ENCODE measurements at regions of chr19 and their contacts with region 1.

Region 1: DNA sequence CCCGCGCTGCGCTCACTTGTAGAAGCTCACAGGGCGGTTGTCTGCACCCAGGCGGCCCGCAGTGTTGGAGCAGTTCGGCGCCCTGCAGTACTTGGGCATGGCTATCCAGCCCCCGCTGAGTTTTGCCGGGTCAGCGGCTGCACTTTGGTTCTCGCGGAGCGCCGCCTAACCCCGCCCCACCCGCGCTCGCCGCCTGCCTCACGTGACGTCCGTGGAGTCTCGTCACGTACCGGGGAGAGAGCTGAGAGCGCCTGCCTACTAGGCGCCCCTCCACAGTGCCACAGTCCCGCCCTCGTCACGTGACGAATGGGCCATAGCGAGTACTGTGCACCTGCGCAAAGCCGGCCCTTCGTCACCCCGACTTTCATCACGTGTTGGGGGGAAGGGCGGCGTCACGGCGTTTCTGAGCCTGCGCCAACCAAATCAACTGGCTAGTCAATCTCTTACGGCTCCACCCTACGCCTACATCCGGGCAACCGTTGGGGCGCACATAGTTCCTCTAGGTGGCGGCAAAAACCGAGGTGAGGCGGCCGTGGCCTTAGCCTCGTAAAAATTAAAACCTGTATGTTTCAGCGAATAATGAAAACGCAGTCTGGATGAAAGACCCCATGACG is at the start of gene THAP8:
- DNase-seq: peak; percentile 100
- H3K4me3 ChIP-seq: peak within 1 kb of the TSS; percentile 52 to 69 (median 64)
- H3K27ac ChIP-seq: peak within 1 kb of the TSS; percentile 90 to 95 (median 93)
- H3K4me1 ChIP-seq: peaks cover 0 to 18% (median 17%) of the 10 kb centered on the region in 4 donors
- H3K27me3 ChIP-seq: no peaks in the 10 kb centered on the region
- CTCF ChIP-seq: peak; percentile 45 to 66 (median 54)
- EP300 ChIP-seq: peak in 2 of 4 donors; percentile 40 to 98
- POLR2A ChIP-seq: peak; percentile 60 to 83
- total RNA-seq, gene THAP8: 12.6 to 23.9 (median 18.9) TPM

Region 2: DNA sequence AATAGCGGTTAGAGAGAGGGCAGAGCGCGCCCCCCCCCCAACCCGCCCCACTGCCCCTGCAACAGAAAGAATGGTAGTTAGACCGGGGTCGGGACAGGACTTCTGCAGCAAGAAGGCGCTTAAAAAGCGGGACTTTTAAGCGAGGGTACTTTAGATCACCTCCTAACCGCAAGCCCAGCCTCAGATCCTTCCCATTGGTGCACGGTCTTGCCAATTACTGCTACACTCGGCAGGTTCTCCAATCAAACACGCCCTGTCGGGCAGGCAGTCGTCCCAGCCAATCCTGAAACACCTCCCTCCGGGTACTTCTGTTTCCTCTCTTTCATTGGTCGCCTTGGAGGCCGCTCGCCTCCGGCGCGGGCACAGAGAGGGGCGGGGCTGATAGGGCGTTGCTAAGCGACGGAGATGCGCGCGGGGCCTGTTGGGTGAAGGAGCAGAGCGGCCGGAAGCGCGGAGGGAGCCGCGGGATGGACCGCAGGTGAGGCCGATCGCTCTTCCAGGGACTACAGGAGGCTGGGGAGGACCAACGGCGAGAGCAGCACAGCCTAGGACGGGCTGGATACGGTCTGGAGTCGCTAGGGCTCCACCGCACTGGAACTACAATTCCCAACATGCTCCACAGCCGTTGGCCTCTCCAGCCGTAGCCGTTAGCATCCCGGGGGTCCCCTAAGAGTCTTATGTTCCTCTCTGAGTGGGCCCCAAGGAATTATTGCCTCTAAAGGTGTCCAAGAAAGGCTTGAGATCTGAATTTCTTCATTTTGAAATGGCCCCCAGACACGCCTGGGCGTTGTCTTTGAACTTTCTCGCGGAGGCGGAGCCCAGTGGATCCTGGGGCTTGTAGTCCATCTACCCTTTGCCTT is 296.2 kb before region 1 on chr19 and contains the start of gene PROSER3:
- intact Hi-C with region 1: loop called (anchors 10 kb)
- DNase-seq: peak; percentile 100
- H3K4me3 ChIP-seq: peak within 1 kb of the TSS; percentile 79 to 86 (median 83)
- H3K27ac ChIP-seq: peak within 1 kb of the TSS; percentile 98 to 99 (median 99)
- H3K4me1 ChIP-seq: peaks cover 0 to 63% (median 49%) of the 10 kb centered on the region in 4 donors
- H3K27me3 ChIP-seq: no peaks in the 10 kb centered on the region
- CTCF ChIP-seq: no peak
- EP300 ChIP-seq: no peak
- POLR2A ChIP-seq: peak; percentile 72 to 83
- total RNA-seq, gene PROSER3: 2.9 to 6.1 (median 5.2) TPM

Region 3: GRCh38 chr19:35995048-35995993 is 58.9 kb before region 1 on chr19 and contains the start of gene SDHAF1:
- intact Hi-C with region 1: loop called (anchors 1 kb)
- DNase-seq: peak; percentile 99
- H3K4me3 ChIP-seq: peak within 1 kb of the TSS; percentile 71 to 98 (median 89)
- H3K27ac ChIP-seq: peak within 1 kb of the TSS; percentile 88 to 94 (median 91)
- H3K4me1 ChIP-seq: peaks cover 0 to 49% (median 42%) of the 10 kb centered on the region in 4 donors
- H3K27me3 ChIP-seq: no peaks in the 10 kb centered on the region
- CTCF ChIP-seq: no peak
- EP300 ChIP-seq: no peak
- POLR2A ChIP-seq: peak; percentile 83 to 87
- total RNA-seq, gene SDHAF1: 56.2 to 135 (median 68.9) TPM

Region 4: GRCh38 chr19:36014029-36014924 is 39.9 kb before region 1 on chr19 and contains the start of gene ALKBH6:
- intact Hi-C with region 1: loop called (anchors 5 kb)
- DNase-seq: peak; percentile 100
- H3K4me3 ChIP-seq: peak within 1 kb of the TSS; percentile 55 to 75 (median 61)
- H3K27ac ChIP-seq: peak within 1 kb of the TSS; percentile 86 to 89 (median 86)
- H3K4me1 ChIP-seq: peaks cover 0 to 23% (median 22%) of the 10 kb centered on the region in 4 donors
- H3K27me3 ChIP-seq: no peaks in the 10 kb centered on the region
- CTCF ChIP-seq: no peak
- EP300 ChIP-seq: no peak
- POLR2A ChIP-seq: peak; percentile 1 to 44
- total RNA-seq, gene ALKBH6: 19.9 to 31.7 (median 26.6) TPM

Region 5: GRCh38 chr19:36114763-36115452 is 60.7 kb after region 1 on chr19 and contains the start of gene POLR2I:
- intact Hi-C with region 1: loop called (anchors 1 kb)
- DNase-seq: peak; percentile 100
- H3K4me3 ChIP-seq: peak within 1 kb of the TSS; percentile 74 to 92 (median 84)
- H3K27ac ChIP-seq: peak within 1 kb of the TSS; percentile 91 to 95 (median 92)
- H3K4me1 ChIP-seq: peaks cover 0 to 36% (median 28%) of the 10 kb centered on the region in 4 donors
- H3K27me3 ChIP-seq: no peaks in the 10 kb centered on the region
- CTCF ChIP-seq: no peak
- EP300 ChIP-seq: peak in 1 of 4 donors; percentile 25
- POLR2A ChIP-seq: peak; percentile 67 to 69
- total RNA-seq, gene POLR2I: 39.9 to 118 (median 83.5) TPM

Measured in sigmoid colon (tissue), 7 donors.